PC-3 (cell line): ENCODE measurements at regions of chr13 and their contacts with region 1.

Region 1: DNA sequence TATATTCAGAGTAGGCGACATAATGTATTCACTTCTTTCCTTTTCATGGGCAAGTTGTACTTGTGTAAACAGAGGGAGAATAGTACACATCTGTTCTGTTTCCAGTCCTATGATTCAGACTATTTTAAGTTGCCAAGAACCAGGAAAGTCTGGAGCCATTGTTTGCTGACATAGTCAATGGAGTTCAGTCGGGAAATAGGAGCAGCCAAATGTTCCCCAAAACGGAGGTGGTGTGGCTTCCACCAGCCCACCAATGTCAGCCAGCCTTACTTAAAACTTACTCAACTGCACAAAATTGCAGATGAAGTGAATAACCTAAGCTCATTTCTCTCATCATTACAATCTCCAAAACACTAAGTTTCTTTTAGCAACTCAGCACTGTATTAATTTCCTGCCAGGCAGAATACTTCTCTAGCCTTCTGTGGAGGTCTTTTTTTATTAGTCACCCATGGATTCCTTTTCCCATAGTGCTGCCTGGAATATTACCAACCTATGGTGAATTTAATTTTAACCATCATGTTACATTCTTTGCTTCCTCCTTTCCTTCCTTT is 22.3 kb upstream of the CSNK1A1L start:
- DNase-seq: peak; percentile 14
- ATAC-seq: peak; percentile 88
- H3K4me3 ChIP-seq: no peak overlapping the region
- H3K27ac ChIP-seq: no peak overlapping the region
- H3K4me1 ChIP-seq: no peaks in the 10 kb centered on the region
- H3K27me3 ChIP-seq: no peaks in the 10 kb centered on the region
- CTCF ChIP-seq: no peak

Region 2: DNA sequence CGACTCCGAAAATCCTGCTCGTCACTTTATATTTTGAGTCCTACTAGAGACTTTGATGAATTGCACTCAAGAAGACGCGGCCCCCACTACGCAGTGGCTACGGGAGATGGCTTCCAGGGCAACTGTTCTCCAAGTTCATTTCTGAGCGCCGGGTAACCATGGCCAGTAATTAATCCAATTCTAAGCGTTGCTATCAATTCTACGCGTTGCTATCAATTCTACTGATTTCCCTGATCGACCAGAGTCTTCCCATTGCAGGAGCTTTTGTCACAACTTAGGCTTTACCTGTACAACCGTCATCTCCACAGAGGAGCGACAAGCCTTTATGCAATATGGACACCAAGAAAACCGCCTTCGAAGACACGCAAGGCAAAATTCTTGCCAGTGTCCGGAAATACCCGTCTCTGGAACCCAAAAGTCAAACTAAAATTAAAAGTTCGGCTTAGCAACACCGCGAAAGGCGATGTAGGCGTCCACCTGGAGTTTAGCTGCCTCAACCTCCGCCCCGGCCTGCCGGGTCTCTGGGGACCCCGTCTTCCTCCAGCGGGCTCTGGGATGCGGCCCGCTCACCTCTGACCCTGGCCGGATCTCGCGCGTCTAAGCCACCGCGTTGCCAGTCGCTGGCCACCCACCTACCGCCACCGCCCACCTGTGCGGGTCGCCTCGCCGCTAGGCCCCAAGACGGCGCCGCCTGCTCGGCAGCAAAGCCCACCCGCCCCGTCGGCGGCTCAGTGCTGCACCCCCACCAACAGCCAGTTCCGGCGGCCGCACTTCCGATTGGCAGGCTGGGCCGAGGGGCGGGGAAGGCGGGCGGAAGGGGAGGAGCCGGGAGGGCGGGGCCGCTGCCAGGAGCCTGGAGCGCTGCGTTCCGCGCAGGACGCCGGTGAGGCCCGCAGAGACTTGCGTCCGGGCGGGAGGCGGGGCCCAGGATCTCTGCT is 68.6 kb before region 1 on chr13 and contains the start of gene SUPT20H:
- CTCF ChIA-PET with region 1: no interaction called
- POLR2A ChIA-PET with region 1: no interaction called
- intact Hi-C with region 1: no loop called
- DNase-seq: peak; percentile 83
- ATAC-seq: peak; percentile 95
- H3K4me3 ChIP-seq: peak within 1 kb of the TSS; percentile 83
- H3K27ac ChIP-seq: peak within 1 kb of the TSS; percentile 36; the same call in 1 of the 2 replicates
- H3K4me1 ChIP-seq: peaks cover 5% of the 10 kb centered on the region
- H3K27me3 ChIP-seq: no peaks in the 10 kb centered on the region
- CTCF ChIP-seq: no peak
- total RNA-seq, gene SUPT20H: 16.8 and 18.1 TPM in 2 replicates

Region 3: DNA sequence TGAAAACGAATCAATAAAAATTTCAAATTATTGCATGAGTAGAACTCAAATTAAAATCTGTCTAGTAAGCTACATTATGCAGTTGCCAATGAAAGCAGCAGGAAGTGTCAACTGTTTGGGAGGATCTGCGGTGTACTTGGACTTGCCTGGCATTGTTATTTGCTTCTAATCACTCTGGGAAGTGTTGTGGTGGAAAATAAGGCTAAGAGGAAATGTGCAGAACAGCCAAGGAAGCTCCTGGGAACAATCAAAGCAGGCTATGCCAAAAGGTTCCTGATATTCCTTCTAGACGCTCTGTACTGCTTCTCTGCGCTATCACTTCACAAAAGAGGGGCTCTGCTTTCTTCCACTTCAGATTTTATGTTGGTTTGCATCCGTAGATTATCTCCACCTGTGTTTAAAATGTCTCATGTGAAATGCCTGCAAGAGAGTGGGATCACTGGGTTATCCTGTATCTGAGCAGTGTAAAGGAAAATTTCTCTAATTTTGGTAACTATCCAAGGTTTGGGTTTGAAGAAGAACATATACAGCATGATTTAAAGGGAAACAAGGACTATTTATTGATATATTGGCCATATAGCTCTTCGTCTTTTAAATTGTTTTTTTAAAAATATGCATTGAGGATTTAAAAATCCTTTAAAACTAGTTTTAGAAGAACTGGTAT is 160.4 kb after region 1 on chr13:
- CTCF ChIA-PET with region 1: no interaction called
- POLR2A ChIA-PET with region 1: no interaction called
- intact Hi-C with region 1: loop called (anchors 10 kb)
- DNase-seq: no peak
- ATAC-seq: no peak
- H3K4me3 ChIP-seq: no peak overlapping the region
- H3K27ac ChIP-seq: no peak overlapping the region
- H3K4me1 ChIP-seq: no peaks in the 10 kb centered on the region
- H3K27me3 ChIP-seq: no peaks in the 10 kb centered on the region
- CTCF ChIP-seq: no peak

Region 4: GRCh38 chr13:37429976-37430375 is 302.2 kb after region 1 on chr13:
- CTCF ChIA-PET with region 1: no interaction called
- POLR2A ChIA-PET with region 1: no interaction called
- intact Hi-C with region 1: no loop called
- DNase-seq: no peak
- ATAC-seq: no peak
- H3K4me3 ChIP-seq: no peak overlapping the region
- H3K27ac ChIP-seq: no peak overlapping the region
- H3K4me1 ChIP-seq: no peaks in the 10 kb centered on the region
- H3K27me3 ChIP-seq: no peaks in the 10 kb centered on the region
- CTCF ChIP-seq: no peak